Activated CD8-positive, alpha-beta memory T cell treated with anti-CD3 and anti-CD28 coated beads, Interleukin-2, amount 10 ng/mL, durations not matched to agents 7 days and 5 days (primary cell): ENCODE measurements at regions of chr22 and their contacts with region 1.

Region 1: DNA sequence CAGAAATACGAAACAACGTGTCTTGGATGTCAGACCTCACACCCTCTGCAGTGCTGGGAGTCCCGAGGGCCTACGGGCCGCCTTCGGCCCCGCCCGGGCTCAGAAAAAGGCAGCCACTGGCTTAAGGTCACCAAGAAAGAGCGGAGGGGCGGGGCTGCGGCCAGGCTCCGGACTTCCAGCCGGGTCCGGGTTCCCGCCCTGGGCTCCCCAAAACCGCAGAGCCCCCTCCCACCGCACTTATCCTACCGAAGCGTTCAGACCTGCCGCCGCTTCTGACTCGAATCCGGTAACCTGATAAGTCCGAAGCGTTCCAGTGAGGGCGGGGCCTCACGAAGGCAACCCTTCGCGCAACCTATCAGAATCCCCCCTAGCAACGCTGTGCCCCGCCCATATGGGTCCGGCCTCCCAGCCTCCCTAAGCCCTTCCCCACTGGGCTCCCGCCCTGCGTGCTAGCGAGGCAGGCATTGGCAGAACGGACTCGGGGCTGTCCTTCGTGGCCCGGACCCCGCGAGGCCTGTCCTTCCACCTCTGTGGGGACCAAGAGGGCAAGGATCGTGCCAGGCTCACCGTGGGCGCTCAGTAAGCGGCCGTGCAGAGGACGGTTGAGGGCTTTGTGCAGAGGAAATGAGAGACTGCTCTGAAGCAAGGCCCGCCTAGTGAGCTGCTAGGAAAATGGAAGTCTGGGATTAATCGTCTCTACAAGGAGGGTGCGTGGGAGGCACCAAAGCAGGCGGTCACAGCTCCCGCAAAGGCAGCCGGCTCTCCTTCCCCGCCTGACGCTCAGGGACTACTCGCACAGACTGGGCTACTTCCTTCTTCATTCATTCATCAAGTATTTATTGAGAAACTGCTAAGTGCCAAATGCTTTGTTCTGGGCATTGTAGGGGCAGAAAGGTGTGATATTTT is at the start of gene NAGA:
- DNase-seq: peak; percentile 97
- ATAC-seq: peak; percentile 98
- H3K4me3 Mint-ChIP-seq: peak within 1 kb of the TSS; percentile 81
- H3K27ac Mint-ChIP-seq: peak within 1 kb of the TSS; percentile 90
- H3K4me1 Mint-ChIP-seq: peaks cover 34% of the 10 kb centered on the region
- H3K27me3 Mint-ChIP-seq: no peaks in the 10 kb centered on the region
- total RNA-seq, gene NAGA: 23.1 to 27.1 TPM

Region 2: GRCh38 chr22:42041784-42042183 is 29.0 kb before region 1 on chr22:
- CTCF ChIA-PET with region 1: interaction called, 10 read pairs
- DNase-seq: no peak
- ATAC-seq: no peak
- H3K4me3 Mint-ChIP-seq: no peak overlapping the region
- H3K27ac Mint-ChIP-seq: no peak overlapping the region
- H3K4me1 Mint-ChIP-seq: peaks cover 1% of the 10 kb centered on the region
- H3K27me3 Mint-ChIP-seq: peaks cover 3% of the 10 kb centered on the region